Calu3 (cell line): ENCODE measurements at regions of chr2 and their contacts with region 1.

Region 1: DNA sequence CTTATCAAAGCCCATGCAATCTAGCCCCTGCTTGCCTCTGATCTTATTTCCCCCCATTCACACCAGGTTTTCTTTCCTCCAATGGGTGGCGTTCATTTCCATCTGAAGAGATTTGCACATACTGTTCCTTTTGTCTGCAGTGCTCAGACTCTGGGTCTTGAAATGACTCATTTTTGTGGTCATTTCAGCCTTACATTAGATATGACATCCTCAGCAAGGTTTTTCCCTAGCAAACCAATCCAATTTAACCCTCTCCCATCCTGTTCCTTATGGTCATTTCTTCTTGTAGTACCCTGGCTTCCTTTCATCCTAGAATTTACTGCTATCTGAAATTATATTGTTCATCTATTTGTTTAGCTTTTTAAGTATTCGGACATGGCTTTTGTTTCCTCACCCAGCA is 42.5 kb upstream of the SCN1A start:
- DNase-seq: no peak
- H3K4me3 Mint-ChIP-seq: no peak overlapping the region
- H3K27ac Mint-ChIP-seq: no peak overlapping the region
- H3K4me1 Mint-ChIP-seq: peaks cover 9% of the 10 kb centered on the region
- H3K27me3 Mint-ChIP-seq: no peaks in the 10 kb centered on the region
- CTCF ChIP-seq: no peak

Region 2: GRCh38 chr2:165743442-165743841 is 426.9 kb before region 1 on chr2:
- CTCF ChIA-PET with region 1: no interaction called
- intact Hi-C with region 1: no loop called
- DNase-seq: no peak
- H3K4me3 Mint-ChIP-seq: no peak overlapping the region
- H3K27ac Mint-ChIP-seq: no peak overlapping the region
- H3K4me1 Mint-ChIP-seq: no peaks in the 10 kb centered on the region
- H3K27me3 Mint-ChIP-seq: no peaks in the 10 kb centered on the region
- CTCF ChIP-seq: no peak

Region 3: GRCh38 chr2:165961818-165962217 is 208.5 kb before region 1 on chr2:
- CTCF ChIA-PET with region 1: no interaction called
- intact Hi-C with region 1: loop called (anchors 5 kb)
- DNase-seq: no peak
- H3K4me3 Mint-ChIP-seq: no peak overlapping the region
- H3K27ac Mint-ChIP-seq: no peak overlapping the region
- H3K4me1 Mint-ChIP-seq: no peaks in the 10 kb centered on the region
- H3K27me3 Mint-ChIP-seq: no peaks in the 10 kb centered on the region
- CTCF ChIP-seq: no peak

Region 4: DNA sequence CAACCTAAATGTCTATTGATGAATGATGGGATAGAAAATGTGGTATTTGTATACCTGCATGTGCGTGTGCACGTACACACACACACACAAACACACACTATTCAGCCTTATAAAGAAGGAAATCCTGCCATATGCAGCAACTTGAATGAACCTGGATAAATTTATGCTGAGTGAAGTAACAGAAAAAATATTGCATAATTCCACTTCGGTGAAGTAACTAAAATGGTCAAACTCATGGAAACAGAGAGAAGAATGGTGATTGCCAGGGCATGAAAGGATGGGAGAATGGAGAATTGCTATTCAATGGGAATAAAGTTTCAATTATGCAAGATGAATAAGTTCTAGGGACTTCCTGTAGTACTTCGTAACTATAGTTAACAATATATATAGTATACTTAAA is 52.9 kb after region 1 on chr2:
- CTCF ChIA-PET with region 1: no interaction called
- intact Hi-C with region 1: no loop called
- DNase-seq: no peak
- H3K4me3 Mint-ChIP-seq: no peak overlapping the region
- H3K27ac Mint-ChIP-seq: no peak overlapping the region
- H3K4me1 Mint-ChIP-seq: no peaks in the 10 kb centered on the region
- H3K27me3 Mint-ChIP-seq: no peaks in the 10 kb centered on the region
- CTCF ChIP-seq: no peak

Region 5: DNA sequence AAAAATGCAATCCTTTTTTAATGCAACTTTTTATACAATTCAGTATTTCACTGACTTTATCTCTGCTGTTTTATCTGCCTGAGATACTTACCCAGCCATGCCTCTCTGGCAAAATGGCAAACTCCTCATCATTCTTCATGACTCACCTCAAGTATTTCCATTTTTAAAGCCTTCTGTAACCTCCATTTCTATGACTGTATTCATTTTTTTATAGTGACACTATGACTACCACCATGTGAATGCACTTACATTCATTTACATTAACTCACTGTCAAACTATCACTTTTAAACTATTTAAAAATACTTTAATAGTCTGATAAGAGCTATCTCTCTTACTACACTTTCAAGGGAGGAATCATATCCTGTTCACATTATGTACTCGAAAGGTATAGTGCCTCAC is 423.0 kb after region 1 on chr2:
- CTCF ChIA-PET with region 1: no interaction called
- intact Hi-C with region 1: no loop called
- DNase-seq: no peak
- H3K4me3 Mint-ChIP-seq: no peak overlapping the region
- H3K27ac Mint-ChIP-seq: no peak overlapping the region
- H3K4me1 Mint-ChIP-seq: no peaks in the 10 kb centered on the region
- H3K27me3 Mint-ChIP-seq: no peaks in the 10 kb centered on the region
- CTCF ChIP-seq: no peak